ENCODE measurements at regions of chr1 and their contacts with region 1.

Region 1: DNA sequence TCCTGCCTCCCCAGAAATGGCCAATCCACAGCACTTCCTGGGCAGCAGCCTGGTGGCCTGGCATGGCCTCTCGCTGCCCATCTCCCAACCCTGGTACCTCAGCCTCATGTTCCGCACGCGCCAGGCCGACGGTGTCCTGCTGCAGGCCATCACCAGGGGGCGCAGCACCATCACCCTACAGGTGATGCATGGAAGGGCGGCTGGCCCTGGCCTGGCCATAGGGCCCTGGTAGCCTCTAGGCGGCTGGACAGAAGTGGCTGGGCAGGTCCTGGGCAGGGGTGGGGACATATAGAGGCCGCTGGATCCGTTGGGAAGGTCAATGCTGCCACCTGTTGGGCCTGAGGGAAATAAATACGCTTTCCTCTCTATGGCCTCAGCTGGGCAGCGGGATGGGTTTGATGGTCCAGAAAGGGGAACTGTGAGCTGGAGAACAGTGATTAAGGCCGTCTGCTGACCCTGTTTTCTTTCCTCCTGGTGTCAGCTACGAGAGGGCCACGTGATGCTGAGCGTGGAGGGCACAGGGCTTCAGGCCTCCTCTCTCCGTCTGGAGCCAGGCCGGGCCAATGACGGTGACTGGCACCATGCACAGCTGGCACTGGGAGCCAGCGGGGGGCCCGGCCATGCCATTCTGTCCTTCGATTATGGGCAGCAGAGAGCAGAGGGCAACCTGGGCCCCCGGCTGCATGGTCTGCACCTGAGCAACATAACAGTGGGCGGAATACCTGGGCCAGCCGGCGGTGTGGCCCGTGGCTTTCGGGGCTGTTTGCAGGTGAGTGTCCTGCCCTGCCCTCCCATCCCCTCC is 14.5 kb downstream of the CELSR2 start:
- DNase-seq: peak; percentile 8
- ATAC-seq: peak; percentile 97
- H3K4me3 ChIP-seq: no peak overlapping the region
- H3K27ac ChIP-seq: no peak overlapping the region
- H3K4me1 ChIP-seq: no peaks in the 10 kb centered on the region
- H3K27me3 ChIP-seq: no peaks in the 10 kb centered on the region
- CTCF ChIP-seq: peak; percentile 89 to 99 (median 96)
- EP300 ChIP-seq: no peak
- POLR2A ChIP-seq: no peak
- RAD21 ChIP-seq: peak; percentile 73

Region 2: DNA sequence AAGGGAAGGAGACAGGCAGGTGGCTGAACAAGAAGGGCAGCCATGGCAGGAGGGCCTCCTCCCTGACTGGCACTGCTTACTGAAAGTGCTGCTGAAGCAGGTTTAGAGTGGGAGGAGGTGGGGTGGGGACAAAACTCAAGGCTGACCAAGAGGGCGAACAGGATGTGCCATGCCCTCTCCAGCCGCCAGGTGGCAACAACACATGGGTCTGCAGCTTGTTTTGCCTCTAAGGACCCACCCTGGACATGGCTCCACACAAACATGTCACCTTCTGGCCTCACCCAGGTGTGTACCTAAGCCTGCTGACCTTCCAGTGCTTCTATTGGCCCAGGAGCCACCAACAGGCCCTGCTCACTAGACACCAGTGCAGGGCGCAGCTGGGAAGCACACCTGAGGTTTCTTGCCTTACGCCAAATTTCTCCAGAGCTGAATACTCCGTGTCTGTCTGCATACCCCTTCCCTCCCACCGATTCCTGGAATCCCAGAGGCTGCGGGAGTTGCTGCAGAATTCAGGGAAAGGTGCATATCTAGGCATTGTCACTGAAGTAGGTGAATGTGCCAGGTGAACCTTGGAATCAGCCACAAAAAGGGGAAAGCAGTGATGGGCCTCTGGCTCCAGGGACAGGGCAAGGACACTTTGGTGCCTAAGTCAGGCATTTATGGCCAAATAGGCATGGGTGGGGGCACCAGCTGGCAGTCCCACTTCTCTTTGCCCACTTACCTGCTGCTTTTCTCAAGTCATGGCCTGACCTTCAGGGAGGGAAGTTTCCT is 13.8 kb after region 1 on chr1:
- CTCF ChIA-PET with region 1: interaction called, 16 read pairs
- POLR2A ChIA-PET with region 1: no interaction called
- RAD21 ChIA-PET with region 1: interaction called, 3 read pairs
- SMC1A ChIA-PET with region 1: interaction called, 6 read pairs
- in situ Hi-C with region 1: no loop called
- intact Hi-C with region 1: no loop called
- DNase-seq: peak; percentile 54
- ATAC-seq: peak; percentile 94
- H3K4me3 ChIP-seq: no peak overlapping the region
- H3K27ac ChIP-seq: no peak overlapping the region
- H3K4me1 ChIP-seq: no peaks in the 10 kb centered on the region; the same call in none of the 2 replicates
- H3K27me3 ChIP-seq: peaks cover 0 to 1% of the 10 kb centered on the region in 2 experiments; a peak in 1 of 4 replicates
- CTCF ChIP-seq: peak; percentile 92 to 97 (median 97); a peak in 5 of 6 replicates
- EP300 ChIP-seq: no peak
- POLR2A ChIP-seq: no peak
- RAD21 ChIP-seq: peak; percentile 76

Region 3: DNA sequence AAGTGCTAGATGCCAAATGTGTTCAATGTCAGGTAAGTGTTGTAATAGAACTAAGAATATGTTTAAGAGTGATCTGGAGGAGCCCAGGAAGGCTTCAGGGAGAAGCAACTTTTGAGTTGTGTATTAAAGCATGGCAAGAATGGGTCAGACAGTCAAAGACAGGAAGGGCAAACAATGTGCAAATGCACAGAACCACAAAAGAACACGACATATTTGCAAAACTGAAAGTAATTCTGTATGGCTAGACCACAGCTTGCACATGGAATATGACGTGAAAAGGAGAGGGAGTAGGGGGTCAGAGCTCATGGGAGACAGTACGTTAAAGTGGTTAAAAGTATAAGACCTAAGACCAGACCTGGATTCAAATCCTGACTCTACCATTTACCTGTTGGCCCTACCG is 141.0 kb after region 1 on chr1:
- CTCF ChIA-PET with region 1: interaction called, 45 read pairs
- POLR2A ChIA-PET with region 1: no interaction called
- RAD21 ChIA-PET with region 1: interaction called, 3 read pairs
- SMC1A ChIA-PET with region 1: interaction called, 7 read pairs
- in situ Hi-C with region 1: loop called (anchors 5 kb)
- intact Hi-C with region 1: no loop called
- DNase-seq: no peak
- ATAC-seq: peak; percentile 36; the same call in 2 of the 3 replicates
- H3K4me3 ChIP-seq: no peak overlapping the region
- H3K27ac ChIP-seq: no peak overlapping the region
- H3K4me1 ChIP-seq: no peaks in the 10 kb centered on the region
- H3K27me3 ChIP-seq: no peaks in the 10 kb centered on the region
- CTCF ChIP-seq: no peak
- EP300 ChIP-seq: no peak
- POLR2A ChIP-seq: no peak
- RAD21 ChIP-seq: no peak

Measured in GM12878 (cell line).